CD14-positive monocyte (primary cell): ENCODE measurements at regions of chr16 and their contacts with region 1.

Region 1: DNA sequence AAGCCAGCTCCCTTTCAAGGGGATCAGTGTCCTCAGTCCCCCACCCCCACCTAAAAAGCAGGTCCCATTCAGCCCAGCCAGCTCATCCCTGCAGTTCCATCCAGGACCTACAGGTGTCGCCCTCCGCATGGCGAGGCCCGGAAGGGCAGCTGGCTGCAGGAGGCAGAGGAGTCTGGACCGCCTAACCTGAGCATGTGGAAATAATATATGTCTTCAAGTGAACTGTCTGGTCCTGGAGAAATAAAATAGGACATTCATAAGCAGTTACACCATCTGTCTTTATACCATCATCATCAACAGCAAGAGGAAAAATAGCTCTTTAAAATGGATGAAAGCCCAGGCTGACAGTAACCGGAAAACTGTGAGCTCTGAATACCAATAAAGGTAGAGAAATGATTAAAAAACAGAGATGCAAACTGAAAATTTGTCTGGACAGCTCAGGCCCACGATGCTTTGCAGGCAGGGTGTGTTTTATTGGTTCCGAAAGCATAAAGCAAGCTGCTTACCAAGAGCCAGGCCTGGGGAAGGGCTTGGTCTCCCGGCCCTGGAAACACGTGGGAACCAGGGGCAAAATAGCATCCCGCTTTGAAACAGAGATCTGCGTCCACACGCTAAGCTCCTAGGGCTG is 215.2 kb downstream of the ZFHX3 start:
- DNase-seq: peak; percentile 64 to 68 (median 66)
- H3K4me3 ChIP-seq: no peak overlapping the region
- H3K4me3 Mint-ChIP-seq: no peak overlapping the region
- H3K27ac ChIP-seq: no peak overlapping the region
- H3K27ac Mint-ChIP-seq: peak overlapping the region in 2 of 7 donors; percentile 14 to 45
- H3K4me1 ChIP-seq: no peaks in the 10 kb centered on the region
- H3K4me1 Mint-ChIP-seq: peaks cover 5% of the 10 kb centered on the region
- H3K27me3 ChIP-seq: no peaks in the 10 kb centered on the region
- H3K27me3 Mint-ChIP-seq: peaks cover 0 to 4% (median 0%) of the 10 kb centered on the region in 3 donors
- CTCF ChIP-seq: peak; percentile 97

Region 2: GRCh38 chr16:72797621-72798020 is 35.1 kb before region 1 on chr16:
- intact Hi-C with region 1: no loop called
- DNase-seq: no peak
- H3K4me3 ChIP-seq: no peak overlapping the region
- H3K4me3 Mint-ChIP-seq: no peak overlapping the region
- H3K27ac ChIP-seq: peak overlapping the region in 1 of 2 donors; percentile 12
- H3K27ac Mint-ChIP-seq: peak overlapping the region in 3 of 7 donors; percentile 7 to 67 (median 11)
- H3K4me1 ChIP-seq: no peaks in the 10 kb centered on the region
- H3K4me1 Mint-ChIP-seq: no peaks in the 10 kb centered on the region
- H3K27me3 ChIP-seq: no peaks in the 10 kb centered on the region
- H3K27me3 Mint-ChIP-seq: peaks cover 0 to 5% (median 2%) of the 10 kb centered on the region in 3 donors
- CTCF ChIP-seq: no peak

Region 3: DNA sequence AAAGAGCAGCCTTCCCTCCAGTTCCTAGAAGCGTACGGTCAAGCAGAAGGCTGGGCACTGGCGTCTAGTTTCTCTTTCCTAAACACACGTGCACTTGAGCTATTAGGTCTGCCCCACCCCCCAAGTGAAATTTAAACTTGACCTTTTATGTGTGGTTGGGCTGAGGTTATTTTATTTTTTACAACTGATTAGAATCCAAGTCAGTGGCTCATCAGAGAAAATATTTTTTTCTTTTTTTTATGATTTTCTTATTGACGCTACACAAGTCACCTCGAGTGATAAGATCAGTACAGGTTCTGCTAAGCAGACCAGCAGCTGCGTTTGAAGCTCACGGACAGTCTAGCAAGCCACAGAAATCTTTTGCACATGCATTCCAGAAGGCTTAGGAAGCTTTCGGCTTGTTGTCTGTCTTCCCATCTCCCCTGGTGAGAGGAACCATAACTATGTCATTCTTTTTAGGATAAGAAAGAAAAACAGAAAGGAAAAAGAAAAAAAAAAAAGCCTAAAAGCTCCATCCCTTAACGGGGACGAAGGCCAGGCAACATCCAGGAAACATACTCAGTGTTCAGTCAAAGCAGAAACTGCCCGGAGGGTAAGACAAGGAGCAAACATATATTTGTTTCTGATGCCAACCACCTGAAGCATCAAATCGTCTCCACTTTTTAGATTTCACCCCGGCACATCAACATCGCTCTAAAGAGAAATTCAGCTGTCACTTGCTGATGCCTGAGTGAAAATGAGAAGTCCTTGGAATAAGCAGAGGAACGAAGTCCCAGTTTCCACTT is 120.3 kb after region 1 on chr16:
- intact Hi-C with region 1: loop called in 1 of 2 experiments (anchors 10 kb)
- DNase-seq: no peak
- H3K4me3 ChIP-seq: no peak overlapping the region
- H3K4me3 Mint-ChIP-seq: no peak overlapping the region
- H3K27ac ChIP-seq: no peak overlapping the region
- H3K27ac Mint-ChIP-seq: no peak overlapping the region
- H3K4me1 ChIP-seq: no peaks in the 10 kb centered on the region
- H3K4me1 Mint-ChIP-seq: no peaks in the 10 kb centered on the region
- H3K27me3 ChIP-seq: no peaks in the 10 kb centered on the region
- H3K27me3 Mint-ChIP-seq: peaks cover 0 to 1% (median 0%) of the 10 kb centered on the region in 3 donors
- CTCF ChIP-seq: no peak

Region 4: GRCh38 chr16:73196670-73197069 is 363.9 kb after region 1 on chr16:
- intact Hi-C with region 1: loop called in 1 of 2 experiments (anchors 2 kb)
- DNase-seq: peak; percentile 57 to 77 (median 73)
- H3K4me3 ChIP-seq: no peak overlapping the region
- H3K4me3 Mint-ChIP-seq: no peak overlapping the region
- H3K27ac ChIP-seq: no peak overlapping the region
- H3K27ac Mint-ChIP-seq: no peak overlapping the region
- H3K4me1 ChIP-seq: peaks cover under 1% of the 10 kb centered on the region in 2 donors
- H3K4me1 Mint-ChIP-seq: peaks cover 5% of the 10 kb centered on the region
- H3K27me3 ChIP-seq: peaks cover 0 to 3% of the 10 kb centered on the region in 2 donors
- H3K27me3 Mint-ChIP-seq: peaks cover 3 to 7% (median 4%) of the 10 kb centered on the region in 3 donors
- CTCF ChIP-seq: peak; percentile 83